Left lung (tissue), 14 donors: ENCODE measurements at regions of chr10 and their contacts with region 1.

Region 1: GRCh38 chr10:22988581-22989360 is 60.9 kb downstream of the ARMC3 start:
- DNase-seq: peak in 3 of 4 donors; percentile 37 to 73 (median 63)
- ATAC-seq: peak; percentile 93
- H3K4me3 ChIP-seq: no peak overlapping the region
- H3K27ac ChIP-seq: no peak overlapping the region
- H3K4me1 ChIP-seq: peaks cover 0 to 11% of the 10 kb centered on the region in 2 donors
- H3K27me3 ChIP-seq: peaks cover 3 to 19% of the 10 kb centered on the region in 2 donors
- CTCF ChIP-seq: peak; percentile 82 to 87

Region 2: GRCh38 chr10:22560913-22561239 is 427.9 kb before region 1 on chr10:
- intact Hi-C with region 1: loop called in 1 of 2 experiments (anchors 10 kb)
- DNase-seq: no peak
- ATAC-seq: no peak
- H3K4me3 ChIP-seq: no peak overlapping the region
- H3K27ac ChIP-seq: no peak overlapping the region
- H3K4me1 ChIP-seq: no peaks in the 10 kb centered on the region
- H3K27me3 ChIP-seq: no peaks in the 10 kb centered on the region
- CTCF ChIP-seq: no peak